Mammary epithelial cell (primary cell): ENCODE measurements at regions of chr3 and their contacts with region 1.

Region 1: DNA sequence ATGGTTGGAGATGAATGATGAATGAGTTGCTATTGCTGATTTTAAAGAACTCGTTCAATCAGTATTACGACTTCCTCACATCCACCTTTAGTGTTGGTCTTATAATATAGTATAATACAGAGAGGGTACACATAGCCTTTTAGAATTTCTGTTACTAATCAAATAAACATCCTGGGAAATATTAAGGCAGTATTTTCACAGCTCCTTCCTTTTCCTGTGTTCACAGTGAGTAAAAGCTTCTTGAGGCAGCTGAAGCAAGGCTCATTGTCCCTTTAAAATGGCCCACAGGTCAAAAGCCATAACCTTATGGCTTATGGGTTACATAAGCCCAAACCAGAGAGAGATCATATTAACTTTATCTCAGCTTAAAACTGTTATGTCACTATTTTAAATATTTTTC is 1.3 kb upstream of the BTLA start:
- DNase-seq: no peak
- H3K4me3 ChIP-seq: no peak overlapping the region
- H3K27ac ChIP-seq: no peak overlapping the region
- H3K4me1 ChIP-seq: no peaks in the 10 kb centered on the region
- H3K27me3 ChIP-seq: no peaks in the 10 kb centered on the region
- CTCF ChIP-seq: no peak

Region 2: DNA sequence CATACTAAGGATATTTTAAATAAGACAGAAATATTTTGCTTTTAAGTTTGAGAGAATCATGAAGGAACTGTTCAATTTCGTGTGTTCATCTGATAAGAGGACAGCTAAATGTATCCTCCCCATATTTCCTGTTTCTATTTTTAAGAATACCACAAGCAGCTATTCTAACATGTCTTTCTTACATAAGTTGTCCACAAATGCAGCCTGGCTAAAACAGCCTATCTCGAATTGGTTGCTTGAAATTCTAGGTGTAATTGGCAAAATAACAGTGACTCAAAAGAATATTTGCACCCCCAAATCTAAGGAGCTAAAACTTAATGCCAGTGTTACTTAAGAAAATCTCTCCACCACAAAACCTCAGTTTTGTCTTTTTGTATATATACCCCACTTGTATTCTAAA is 36.4 kb before region 1 on chr3:
- CTCF ChIA-PET with region 1: no interaction called
- dilution Hi-C with region 1: no loop called
- in situ Hi-C with region 1: no loop called
- intact Hi-C with region 1: loop called (anchors 5 kb)
- DNase-seq: no peak
- H3K4me3 ChIP-seq: no peak overlapping the region
- H3K27ac ChIP-seq: no peak overlapping the region
- H3K4me1 ChIP-seq: no peaks in the 10 kb centered on the region
- H3K27me3 ChIP-seq: no peaks in the 10 kb centered on the region
- CTCF ChIP-seq: no peak

Region 3: DNA sequence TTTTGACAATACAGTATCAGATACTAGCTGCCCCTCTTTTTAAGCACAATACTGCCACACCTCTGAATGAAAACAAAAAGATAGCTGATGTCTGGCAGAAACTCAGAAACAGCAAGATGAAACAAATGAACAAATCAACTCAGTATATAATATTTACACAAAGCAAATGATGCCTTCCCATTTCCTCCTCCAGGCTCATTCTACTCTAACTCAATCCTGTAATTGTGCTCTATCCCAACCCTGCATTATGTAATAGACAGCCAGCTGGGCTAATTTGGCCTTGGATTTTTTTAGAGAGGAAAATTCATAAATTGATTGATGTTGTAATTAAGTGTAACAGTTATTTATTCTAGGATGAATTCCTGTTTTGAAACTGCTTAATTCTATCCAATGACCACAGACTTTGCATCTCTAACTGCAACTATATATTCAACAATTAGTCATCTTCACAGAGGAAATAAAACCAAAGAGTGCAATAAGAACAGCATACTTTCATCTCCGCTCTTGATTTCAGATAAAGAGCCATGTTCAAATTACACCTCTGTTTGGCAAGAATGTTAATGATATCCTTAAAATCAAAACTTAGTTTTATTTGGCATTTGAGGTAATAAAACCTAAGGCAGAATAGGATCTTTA is 55.0 kb after region 1 on chr3:
- CTCF ChIA-PET with region 1: no interaction called
- dilution Hi-C with region 1: no loop called
- in situ Hi-C with region 1: no loop called
- intact Hi-C with region 1: no loop called
- DNase-seq: no peak
- H3K4me3 ChIP-seq: no peak overlapping the region
- H3K27ac ChIP-seq: no peak overlapping the region
- H3K4me1 ChIP-seq: peaks cover 14% of the 10 kb centered on the region
- H3K27me3 ChIP-seq: no peaks in the 10 kb centered on the region
- CTCF ChIP-seq: no peak